Esophagus muscularis mucosa (tissue), 4 donors: ENCODE measurements at regions of chr17 and their contacts with region 1.

Region 1: DNA sequence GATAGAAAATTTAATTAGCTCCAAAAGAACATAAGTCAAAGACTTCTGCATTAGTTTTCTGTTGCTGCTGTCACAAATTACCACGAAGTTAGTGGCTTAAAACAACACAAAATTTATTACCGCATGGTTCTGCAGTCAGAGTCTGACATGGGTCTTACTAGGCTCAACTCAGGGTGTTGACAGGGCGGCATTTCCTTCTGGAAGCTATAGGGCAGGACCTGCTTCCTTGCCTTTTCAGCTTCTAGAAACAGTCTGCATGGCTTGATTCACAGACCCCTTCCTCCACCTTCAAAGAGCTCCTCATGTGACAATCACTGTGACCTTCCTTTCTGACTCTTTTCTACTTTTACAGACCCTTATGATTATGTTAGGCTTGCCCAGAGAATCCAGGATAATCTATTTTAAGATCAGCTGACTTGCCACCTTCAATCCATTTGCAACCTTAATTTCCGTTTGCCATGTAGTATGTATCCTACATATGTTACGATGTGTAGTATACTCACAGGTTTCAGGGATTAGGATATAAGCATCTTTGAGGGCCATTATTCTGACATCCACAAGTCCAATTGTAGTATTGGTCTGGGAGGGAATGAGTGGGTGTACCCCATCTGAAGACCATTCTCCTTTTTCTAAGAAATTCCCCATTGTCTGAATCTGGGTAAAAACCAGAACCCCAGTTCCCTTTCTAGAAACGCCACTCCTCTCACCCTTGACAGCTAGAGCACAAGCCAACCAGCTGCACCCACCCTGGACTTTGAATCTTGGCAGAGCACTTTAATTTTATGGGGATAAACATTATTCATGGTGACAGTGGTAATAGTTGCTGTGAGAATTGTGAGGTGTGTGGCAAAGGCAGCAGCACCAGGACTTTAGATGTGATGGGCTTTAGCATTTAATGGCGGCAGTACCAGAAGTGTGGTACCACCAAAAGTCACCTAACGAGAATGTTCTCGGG is 265.5 kb downstream of the KCNJ2 start:
- DNase-seq: no peak
- H3K4me3 ChIP-seq: no peak overlapping the region
- H3K27ac ChIP-seq: no peak overlapping the region
- H3K4me1 ChIP-seq: no peaks in the 10 kb centered on the region
- H3K27me3 ChIP-seq: no peaks in the 10 kb centered on the region
- CTCF ChIP-seq: no peak
- EP300 ChIP-seq: no peak
- POLR2A ChIP-seq: no peak

Region 2: GRCh38 chr17:70295731-70296130 is 139.1 kb before region 1 on chr17:
- intact Hi-C with region 1: no loop called
- DNase-seq: no peak
- H3K4me3 ChIP-seq: no peak overlapping the region
- H3K27ac ChIP-seq: no peak overlapping the region
- H3K4me1 ChIP-seq: no peaks in the 10 kb centered on the region
- H3K27me3 ChIP-seq: no peaks in the 10 kb centered on the region
- CTCF ChIP-seq: no peak
- EP300 ChIP-seq: no peak
- POLR2A ChIP-seq: no peak

Region 3: DNA sequence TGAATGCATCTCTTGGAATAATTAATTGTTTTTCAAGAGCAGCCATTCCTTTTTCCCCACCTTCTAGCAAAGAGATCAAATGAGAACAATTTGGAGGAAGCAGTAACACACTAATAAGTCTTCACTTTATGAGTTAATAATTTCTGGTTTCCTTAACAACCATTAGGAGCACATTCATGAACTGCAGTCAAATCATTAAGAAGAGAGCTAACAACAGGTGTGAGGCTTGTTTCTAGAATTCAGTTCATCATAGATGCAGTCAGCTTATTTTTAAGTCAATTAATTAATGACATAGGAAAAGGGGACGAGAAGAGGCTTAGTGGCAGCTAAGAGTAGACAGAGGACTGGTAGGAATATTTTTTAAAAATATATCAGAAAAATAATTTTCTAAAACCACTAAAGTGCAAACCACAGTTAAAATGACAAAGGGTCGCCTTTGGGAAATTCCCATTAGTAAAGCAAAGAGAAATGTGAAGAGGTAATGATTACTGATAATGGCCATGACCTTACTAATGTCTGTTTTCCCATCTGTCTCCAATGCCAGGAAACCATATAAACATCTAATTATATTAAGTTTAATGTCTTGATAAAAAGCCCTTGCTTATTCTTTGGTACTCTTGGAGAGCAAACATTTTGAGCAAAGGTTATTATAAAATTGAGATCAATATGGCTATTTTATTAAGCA is 81.3 kb before region 1 on chr17:
- intact Hi-C with region 1: loop called (anchors 10 kb)
- DNase-seq: no peak
- H3K4me3 ChIP-seq: no peak overlapping the region
- H3K27ac ChIP-seq: no peak overlapping the region
- H3K4me1 ChIP-seq: no peaks in the 10 kb centered on the region
- H3K27me3 ChIP-seq: no peaks in the 10 kb centered on the region
- CTCF ChIP-seq: no peak
- EP300 ChIP-seq: no peak
- POLR2A ChIP-seq: no peak